ENCODE measurements at regions of chr7 and their contacts with region 1.

Region 1: DNA sequence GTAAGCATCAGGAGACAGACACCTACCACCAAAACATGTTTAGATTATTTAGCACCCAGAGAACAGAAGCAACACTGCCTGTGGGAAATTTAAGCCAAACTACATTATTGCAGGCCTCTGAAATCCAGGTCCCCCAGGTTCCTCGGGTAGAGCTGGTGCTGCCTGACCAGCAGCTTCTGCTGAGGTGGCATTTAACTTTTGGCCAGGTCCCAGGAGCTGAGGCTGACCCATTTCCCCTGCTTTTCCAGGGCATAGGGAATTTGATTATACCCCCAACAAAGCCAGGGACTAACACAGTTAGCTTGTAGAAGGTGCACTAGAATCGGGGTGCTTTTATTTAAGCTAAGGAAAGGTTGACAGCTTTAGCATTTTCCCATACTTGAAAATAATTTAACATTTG is 4.7 kb downstream of the LRRC4 start:
- DNase-seq: no peak
- H3K4me3 ChIP-seq: no peak overlapping the region
- H3K27ac ChIP-seq: no peak overlapping the region
- H3K4me1 ChIP-seq: peaks cover 30% of the 10 kb centered on the region
- H3K27me3 ChIP-seq: no peaks in the 10 kb centered on the region
- CTCF ChIP-seq: no peak

Region 2: GRCh38 chr7:127514499-127514898 is 512.1 kb before region 1 on chr7:
- CTCF ChIA-PET with region 1: no interaction called
- POLR2A ChIA-PET with region 1: no interaction called
- intact Hi-C with region 1: no loop called
- DNase-seq: peak in 1 of 2 experiments; percentile 37
- H3K4me3 ChIP-seq: no peak overlapping the region
- H3K27ac ChIP-seq: no peak overlapping the region
- H3K4me1 ChIP-seq: no peaks in the 10 kb centered on the region
- H3K27me3 ChIP-seq: peaks cover 19% of the 10 kb centered on the region
- CTCF ChIP-seq: peak; percentile 42; the same call in 1 of the 2 replicates

Region 3: GRCh38 chr7:128106840-128107239 is 80.3 kb after region 1 on chr7:
- CTCF ChIA-PET with region 1: interaction called, 12 read pairs
- POLR2A ChIA-PET with region 1: no interaction called
- intact Hi-C with region 1: no loop called
- DNase-seq: no peak
- H3K4me3 ChIP-seq: no peak overlapping the region
- H3K27ac ChIP-seq: no peak overlapping the region
- H3K4me1 ChIP-seq: no peaks in the 10 kb centered on the region
- H3K27me3 ChIP-seq: peaks cover 7% of the 10 kb centered on the region
- CTCF ChIP-seq: no peak

Region 4: DNA sequence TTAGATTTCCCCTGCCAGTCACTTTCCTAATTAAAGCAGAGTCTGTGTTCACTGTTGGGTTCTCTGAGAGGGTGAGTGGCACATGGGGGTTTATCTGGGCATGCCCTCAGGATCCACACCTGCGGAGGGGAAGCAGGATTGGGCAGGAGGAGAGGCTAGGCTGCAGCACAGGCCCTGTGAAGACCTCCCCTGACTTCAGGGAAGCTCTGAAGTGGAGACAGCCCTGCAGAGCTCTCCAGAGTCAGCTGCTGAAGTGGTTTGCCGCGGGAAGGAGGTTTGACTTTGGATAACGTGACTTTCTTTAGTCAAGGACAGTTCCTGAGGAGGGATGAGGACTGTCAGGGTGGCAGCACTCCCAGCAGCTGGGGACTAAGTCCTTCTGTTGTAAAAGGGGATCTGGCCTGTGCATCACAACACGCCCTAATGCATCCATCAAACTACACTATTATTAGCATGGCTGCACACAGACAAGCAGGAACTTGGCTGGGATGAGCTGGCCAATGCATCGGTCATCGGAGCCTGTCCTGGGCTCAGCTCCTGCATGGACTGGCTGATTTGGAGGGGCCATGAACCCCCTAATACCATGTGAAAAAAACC is 163.6 kb after region 1 on chr7:
- CTCF ChIA-PET with region 1: no interaction called
- POLR2A ChIA-PET with region 1: no interaction called
- intact Hi-C with region 1: no loop called
- DNase-seq: no peak
- H3K4me3 ChIP-seq: no peak overlapping the region
- H3K27ac ChIP-seq: no peak overlapping the region
- H3K4me1 ChIP-seq: no peaks in the 10 kb centered on the region
- H3K27me3 ChIP-seq: peaks cover 12% of the 10 kb centered on the region
- CTCF ChIP-seq: no peak